GM12878 (cell line): ENCODE measurements at regions of chr7 and their contacts with region 1.

Region 1: DNA sequence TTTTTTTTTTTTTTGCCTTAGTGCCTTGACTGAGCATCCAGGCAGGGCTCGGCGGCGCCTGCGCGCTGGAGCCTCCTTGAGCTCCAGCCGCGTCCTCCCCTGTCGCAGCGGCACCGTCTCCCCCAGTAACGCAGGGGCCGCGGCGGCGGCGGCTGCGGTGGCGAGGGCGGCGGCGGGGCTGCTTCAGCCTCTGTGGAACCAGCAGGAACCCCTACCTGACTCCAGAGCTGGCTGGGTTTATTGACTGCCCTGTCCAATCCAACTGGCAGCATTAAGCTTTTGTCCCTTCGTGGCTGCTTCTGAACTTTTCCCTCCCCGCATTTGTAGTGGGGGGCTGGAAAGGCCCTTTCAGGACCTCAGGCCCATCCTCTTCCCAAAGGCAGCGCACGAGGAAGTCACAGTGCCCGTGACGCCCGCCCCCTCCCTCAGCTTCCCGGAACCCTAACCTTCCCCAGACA is at the start of gene GPR85:
- DNase-seq: no peak
- ATAC-seq: peak; percentile 66
- H3K4me3 ChIP-seq: no peak within 1 kb of the TSS
- H3K27ac ChIP-seq: no peak within 1 kb of the TSS
- H3K4me1 ChIP-seq: no peaks in the 10 kb centered on the region
- H3K27me3 ChIP-seq: peaks cover 0 to 1% of the 10 kb centered on the region in 2 experiments; a peak in 2 of 4 replicates
- CTCF ChIP-seq: no peak
- EP300 ChIP-seq: no peak
- POLR2A ChIP-seq: no peak
- RAD21 ChIP-seq: no peak
- polyA plus RNA-seq, gene GPR85: not detected

Region 2: GRCh38 chr7:112262036-112262435 is 824.4 kb before region 1 on chr7:
- CTCF ChIA-PET with region 1: no interaction called
- POLR2A ChIA-PET with region 1: interaction called, 10 read pairs
- RAD21 ChIA-PET with region 1: no interaction called
- SMC1A ChIA-PET with region 1: no interaction called
- in situ Hi-C with region 1: no loop called
- intact Hi-C with region 1: no loop called
- DNase-seq: no peak
- ATAC-seq: no peak
- H3K4me3 ChIP-seq: no peak overlapping the region
- H3K27ac ChIP-seq: no peak overlapping the region
- H3K4me1 ChIP-seq: no peaks in the 10 kb centered on the region; the same call in 1 of the 2 replicates
- H3K27me3 ChIP-seq: no peaks in the 10 kb centered on the region
- CTCF ChIP-seq: no peak
- EP300 ChIP-seq: no peak
- POLR2A ChIP-seq: no peak
- RAD21 ChIP-seq: no peak

Region 3: GRCh38 chr7:113128028-113128427 is 41.6 kb after region 1 on chr7:
- CTCF ChIA-PET with region 1: no interaction called
- POLR2A ChIA-PET with region 1: no interaction called
- RAD21 ChIA-PET with region 1: no interaction called
- SMC1A ChIA-PET with region 1: no interaction called
- in situ Hi-C with region 1: no loop called
- intact Hi-C with region 1: no loop called
- DNase-seq: no peak
- ATAC-seq: no peak
- H3K4me3 ChIP-seq: no peak overlapping the region
- H3K27ac ChIP-seq: no peak overlapping the region
- H3K4me1 ChIP-seq: no peaks in the 10 kb centered on the region
- H3K27me3 ChIP-seq: no peaks in the 10 kb centered on the region
- CTCF ChIP-seq: no peak
- EP300 ChIP-seq: no peak
- POLR2A ChIP-seq: no peak
- RAD21 ChIP-seq: no peak